GM23248 (cell line): ENCODE measurements at regions of chr7 and their contacts with region 1.

Region 1: DNA sequence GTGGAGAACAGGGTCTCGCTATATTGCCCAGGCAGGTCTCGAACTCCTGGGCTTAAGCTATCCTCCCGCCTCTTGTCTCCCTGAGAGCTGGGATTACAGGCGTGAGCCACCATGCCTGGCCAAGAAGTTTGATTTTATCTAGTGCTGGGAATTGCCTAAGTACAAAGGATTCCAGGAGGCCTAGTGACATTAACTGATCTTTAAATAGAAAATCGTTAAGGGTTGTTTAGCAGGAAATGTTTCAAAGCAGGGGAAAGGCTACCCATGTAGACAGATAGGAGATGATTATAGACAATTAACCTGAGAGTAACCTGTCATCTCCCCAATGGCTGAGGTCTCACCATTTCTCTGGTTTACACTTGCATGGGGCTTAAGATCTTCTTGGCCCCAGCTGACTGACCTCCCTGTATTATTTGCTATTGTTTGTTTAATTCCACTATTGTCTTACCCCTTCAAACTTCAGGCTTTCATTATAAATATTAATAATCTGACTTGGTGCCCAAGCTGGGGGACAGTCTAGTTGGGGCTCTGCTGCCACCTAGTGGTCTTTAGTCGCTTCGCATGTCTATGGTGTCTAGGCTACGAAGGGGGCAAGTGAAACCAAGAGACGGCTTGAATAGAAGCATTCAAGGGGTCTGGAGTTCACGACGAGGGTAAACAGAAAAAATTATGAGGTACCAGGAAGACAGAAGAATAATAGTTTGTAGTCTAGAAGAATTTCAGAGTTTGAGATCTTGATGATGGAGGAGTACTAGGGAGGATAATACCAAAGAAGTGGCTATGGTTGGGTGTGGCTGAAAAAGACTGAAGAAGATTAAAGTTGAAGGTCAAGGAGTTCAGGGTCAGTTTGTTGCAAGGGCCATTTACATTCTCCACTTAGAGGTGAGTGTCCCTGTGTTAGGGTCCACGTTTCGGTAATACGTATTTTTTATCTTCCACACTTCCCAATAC is 40.4 kb upstream of the BPGM start:
- DNase-seq: peak; percentile 74
- H3K4me3 ChIP-seq: peak overlapping the region; percentile 49
- H3K27ac ChIP-seq: no peak overlapping the region
- H3K4me1 ChIP-seq: 0 out of 2 replicates have a peak, but pooled peaks cover 6% of the 10 kb centered on the region
- H3K27me3 ChIP-seq: no peaks in the 10 kb centered on the region

Region 2: GRCh38 chr7:134432296-134433152 is 173.7 kb before region 1 on chr7:
- in situ Hi-C with region 1: loop called (anchors 5 kb)
- DNase-seq: peak; percentile 95
- H3K4me3 ChIP-seq: peak overlapping the region; percentile 75
- H3K27ac ChIP-seq: peak overlapping the region; percentile 82
- H3K4me1 ChIP-seq: peaks cover 15% of the 10 kb centered on the region
- H3K27me3 ChIP-seq: no peaks in the 10 kb centered on the region

Region 3: GRCh38 chr7:134527979-134528371 is 78.3 kb before region 1 on chr7:
- in situ Hi-C with region 1: loop called (anchors 10 kb)
- DNase-seq: peak; percentile 82
- H3K4me3 ChIP-seq: peak overlapping the region; percentile 28; the same call in 1 of the 2 replicates
- H3K27ac ChIP-seq: no peak overlapping the region
- H3K4me1 ChIP-seq: peaks cover 20% of the 10 kb centered on the region
- H3K27me3 ChIP-seq: no peaks in the 10 kb centered on the region; the same call in 1 of the 2 replicates